ENCODE measurements at regions of chr6 and their contacts with region 1.

Region 1: DNA sequence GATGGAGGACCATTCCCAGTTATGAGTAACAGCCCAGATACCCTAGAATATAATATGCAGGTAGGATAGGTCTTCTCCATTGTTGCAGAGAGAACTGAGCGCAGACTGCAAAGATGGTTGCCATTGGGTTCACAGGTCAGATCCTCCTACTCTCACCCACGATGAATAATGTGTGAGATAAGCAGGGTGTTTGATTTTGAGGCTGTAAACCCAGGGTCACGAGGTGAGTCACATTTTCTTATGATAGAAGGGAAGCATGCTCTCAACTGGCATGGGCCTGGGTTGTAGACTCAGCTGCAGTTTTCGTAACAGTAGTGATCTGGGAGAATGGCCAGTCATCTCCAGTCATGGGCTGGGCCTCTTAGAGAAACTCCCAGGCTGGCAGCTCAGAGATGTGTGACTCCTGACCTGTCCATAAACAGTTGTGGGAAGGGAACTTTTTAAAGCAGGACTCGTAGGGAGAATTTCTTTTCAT is 74.2 kb downstream of the CD164 start:
- DNase-seq: peak; percentile 68
- H3K4me3 Mint-ChIP-seq: no peak overlapping the region
- H3K27ac Mint-ChIP-seq: no peak overlapping the region
- H3K4me1 Mint-ChIP-seq: no peaks in the 10 kb centered on the region
- H3K27me3 Mint-ChIP-seq: no peaks in the 10 kb centered on the region
- CTCF ChIP-seq: no peak

Region 2: GRCh38 chr6:109202409-109203284 is 105.4 kb before region 1 on chr6:
- CTCF ChIA-PET with region 1: no interaction called
- POLR2A ChIA-PET with region 1: no interaction called
- intact Hi-C with region 1: loop called (anchors 10 kb)
- DNase-seq: no peak
- H3K4me3 Mint-ChIP-seq: no peak overlapping the region
- H3K27ac Mint-ChIP-seq: no peak overlapping the region
- H3K4me1 Mint-ChIP-seq: no peaks in the 10 kb centered on the region
- H3K27me3 Mint-ChIP-seq: no peaks in the 10 kb centered on the region
- CTCF ChIP-seq: no peak

Measured in MCF 10A (cell line).